ENCODE measurements at regions of chr10 and their contacts with region 1.

Region 1: GRCh38 chr10:29409241-29410057 is 120.6 kb downstream of the LYZL1 start:
- DNase-seq: peak; percentile 65
- H3K27ac ChIP-seq: peak overlapping the region; percentile 87
- CTCF ChIP-seq: no peak

Region 2: GRCh38 chr10:29553544-29554250 is 144.2 kb after region 1 on chr10:
- CTCF ChIA-PET with region 1: no interaction called
- POLR2A ChIA-PET with region 1: interaction called, 12 read pairs
- DNase-seq: no peak
- H3K27ac ChIP-seq: no peak overlapping the region
- CTCF ChIP-seq: no peak